ENCODE measurements at regions of chr1 and their contacts with region 1.

Region 1: GRCh38 chr1:31605908-31606427 is 11.5 kb upstream of the HCRTR1 start:
- DNase-seq: peak; percentile 65
- ATAC-seq: peak; percentile 97
- H3K4me3 ChIP-seq: no peak overlapping the region
- H3K4me3 Mint-ChIP-seq: peak overlapping the region; percentile 27
- H3K27ac ChIP-seq: no peak overlapping the region
- H3K27ac Mint-ChIP-seq: peak overlapping the region; percentile 60
- H3K4me1 ChIP-seq: peaks cover 7 to 8% of the 10 kb centered on the region in 2 donors
- H3K4me1 Mint-ChIP-seq: peaks cover 13% of the 10 kb centered on the region
- H3K27me3 ChIP-seq: peaks cover 0 to 3% (median 0%) of the 10 kb centered on the region in 4 experiments
- H3K27me3 Mint-ChIP-seq: no peaks in the 10 kb centered on the region
- CTCF ChIP-seq: no peak

Region 2: GRCh38 chr1:31593770-31594632 is 12.0 kb before region 1 on chr1:
- CTCF ChIA-PET with region 1: interaction called, 3 read pairs
- POLR2A ChIA-PET with region 1: no interaction called
- intact Hi-C with region 1: loop called (anchors 1 kb)
- DNase-seq: peak; percentile 75
- ATAC-seq: peak; percentile 81
- H3K4me3 ChIP-seq: no peak overlapping the region
- H3K4me3 Mint-ChIP-seq: no peak overlapping the region
- H3K27ac ChIP-seq: no peak overlapping the region
- H3K27ac Mint-ChIP-seq: no peak overlapping the region
- H3K4me1 ChIP-seq: no peaks in the 10 kb centered on the region
- H3K4me1 Mint-ChIP-seq: peaks cover 11% of the 10 kb centered on the region
- H3K27me3 ChIP-seq: peaks cover 0 to 12% (median 2%) of the 10 kb centered on the region in 4 experiments
- H3K27me3 Mint-ChIP-seq: peaks cover 28% of the 10 kb centered on the region
- CTCF ChIP-seq: peak; percentile 65

Region 3: DNA sequence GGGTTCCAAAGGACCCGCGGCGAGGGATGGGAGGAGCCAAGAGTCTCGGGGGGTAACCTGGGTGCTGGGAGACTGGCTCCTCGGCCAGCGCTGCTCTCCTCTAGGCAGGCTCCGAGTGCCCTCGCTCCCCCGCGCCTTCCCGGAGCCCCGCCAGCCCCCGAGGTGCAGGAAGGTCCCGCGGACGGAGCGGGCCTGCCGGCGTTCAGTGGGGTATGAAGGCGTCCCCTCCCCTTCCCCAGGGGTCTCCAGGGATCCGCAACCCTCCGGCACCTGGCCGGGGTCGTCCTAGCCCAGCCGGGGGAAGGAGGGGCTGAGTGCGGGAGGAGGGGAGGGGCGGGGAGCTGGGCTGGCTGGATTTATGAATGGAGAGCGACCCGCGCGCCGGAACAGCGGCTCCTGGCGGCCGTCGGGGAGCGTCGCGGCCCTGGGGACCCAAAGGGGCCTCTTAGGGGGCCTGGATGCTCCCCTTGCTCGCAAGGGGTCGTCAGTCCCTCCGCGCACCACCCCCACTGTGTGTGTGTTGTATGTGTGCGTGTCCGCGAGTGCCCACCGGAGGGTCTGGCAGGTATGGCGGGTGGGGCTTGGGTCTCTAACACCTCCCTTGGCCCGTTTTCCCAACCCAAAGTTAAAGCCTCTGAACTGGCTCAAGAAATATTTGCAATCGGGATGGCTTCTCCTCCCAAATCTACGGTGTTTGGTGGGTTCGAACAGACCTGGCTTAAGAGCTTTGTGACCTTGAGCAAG is 12.1 kb after region 1 on chr1:
- CTCF ChIA-PET with region 1: interaction called, 14 read pairs
- POLR2A ChIA-PET with region 1: no interaction called
- intact Hi-C with region 1: no loop called
- DNase-seq: peak; percentile 68
- ATAC-seq: peak; percentile 76
- H3K4me3 ChIP-seq: peak overlapping the region in 4 of 5 experiments; percentile 38 to 55 (median 44)
- H3K4me3 Mint-ChIP-seq: peak overlapping the region; percentile 70
- H3K27ac ChIP-seq: no peak overlapping the region
- H3K27ac Mint-ChIP-seq: no peak overlapping the region
- H3K4me1 ChIP-seq: peaks cover 13 to 19% of the 10 kb centered on the region in 2 donors
- H3K4me1 Mint-ChIP-seq: peaks cover 22% of the 10 kb centered on the region
- H3K27me3 ChIP-seq: peaks cover 0 to 33% (median 12%) of the 10 kb centered on the region in 4 experiments
- H3K27me3 Mint-ChIP-seq: peaks cover 35% of the 10 kb centered on the region
- CTCF ChIP-seq: peak; percentile 87

Region 4: DNA sequence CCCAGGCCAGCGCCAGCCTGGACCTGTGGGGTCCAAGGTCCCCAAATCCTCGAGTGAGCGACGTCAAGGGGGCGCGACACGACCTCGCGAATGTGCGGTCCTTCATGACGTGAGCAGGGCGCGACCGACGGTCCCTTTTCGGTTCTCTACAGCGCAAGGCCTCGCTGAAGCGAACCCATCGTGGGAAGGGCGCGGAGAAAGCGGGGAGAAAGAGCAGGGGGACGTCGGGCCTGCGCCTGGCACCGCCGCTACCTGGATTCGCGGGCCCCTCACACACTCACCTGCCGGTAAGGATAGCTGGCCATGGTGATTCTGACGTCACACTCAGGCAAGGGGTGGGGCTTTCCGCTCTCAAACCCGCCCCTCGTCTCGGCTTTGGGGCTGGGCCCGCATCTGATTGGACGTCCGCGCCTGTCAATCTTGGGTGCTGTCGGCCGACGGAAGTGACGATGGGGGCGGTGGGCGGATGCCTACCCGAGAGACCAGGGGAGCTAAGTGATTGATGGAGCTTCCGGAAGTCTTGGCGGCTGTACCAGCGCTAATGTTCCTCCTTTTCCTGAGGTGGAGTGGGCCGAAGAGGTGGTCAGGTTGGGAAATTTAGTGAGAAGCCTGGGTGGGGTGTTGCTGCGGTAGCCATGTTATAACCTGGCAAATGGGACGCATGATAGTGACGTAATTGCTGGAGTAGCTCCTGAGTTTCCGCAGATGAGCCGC is 38.7 kb after region 1 on chr1 and contains the start of gene PEF1:
- CTCF ChIA-PET with region 1: no interaction called
- POLR2A ChIA-PET with region 1: no interaction called
- intact Hi-C with region 1: loop called (anchors 2 kb)
- DNase-seq: peak; percentile 100
- ATAC-seq: peak; percentile 93
- H3K4me3 ChIP-seq: peak within 1 kb of the TSS; percentile 70 to 98 (median 95)
- H3K4me3 Mint-ChIP-seq: peak within 1 kb of the TSS; percentile 98
- H3K27ac ChIP-seq: peak within 1 kb of the TSS; percentile 98 to 99
- H3K27ac Mint-ChIP-seq: peak within 1 kb of the TSS; percentile 99
- H3K4me1 ChIP-seq: peaks cover 17 to 19% of the 10 kb centered on the region in 2 donors
- H3K4me1 Mint-ChIP-seq: peaks cover 31% of the 10 kb centered on the region
- H3K27me3 ChIP-seq: no peaks in the 10 kb centered on the region
- H3K27me3 Mint-ChIP-seq: no peaks in the 10 kb centered on the region
- CTCF ChIP-seq: no peak
- total RNA-seq, gene PEF1: 36.7 and 46.9 TPM in 2 replicates

Region 5: GRCh38 chr1:31689821-31690220 is 83.9 kb after region 1 on chr1:
- CTCF ChIA-PET with region 1: no interaction called
- POLR2A ChIA-PET with region 1: no interaction called
- intact Hi-C with region 1: no loop called
- DNase-seq: no peak
- ATAC-seq: no peak
- H3K4me3 ChIP-seq: no peak overlapping the region
- H3K4me3 Mint-ChIP-seq: no peak overlapping the region
- H3K27ac ChIP-seq: no peak overlapping the region
- H3K27ac Mint-ChIP-seq: no peak overlapping the region
- H3K4me1 ChIP-seq: peaks cover 0 to 7% of the 10 kb centered on the region in 2 donors
- H3K4me1 Mint-ChIP-seq: peaks cover 5% of the 10 kb centered on the region
- H3K27me3 ChIP-seq: peaks cover 0 to 9% (median 0%) of the 10 kb centered on the region in 4 experiments
- H3K27me3 Mint-ChIP-seq: peaks cover 20% of the 10 kb centered on the region
- CTCF ChIP-seq: no peak